ENCODE measurements at regions of chr1 and their contacts with region 1.

Region 1: GRCh38 chr1:227086623-227087022 is 146.5 kb downstream of the COQ8A start:
- DNase-seq: no peak
- ATAC-seq: no peak
- H3K4me3 ChIP-seq: no peak overlapping the region
- H3K4me3 Mint-ChIP-seq: no peak overlapping the region
- H3K27ac ChIP-seq: no peak overlapping the region
- H3K27ac Mint-ChIP-seq: no peak overlapping the region
- H3K4me1 ChIP-seq: no peaks in the 10 kb centered on the region
- H3K4me1 Mint-ChIP-seq: no peaks in the 10 kb centered on the region
- H3K27me3 ChIP-seq: no peaks in the 10 kb centered on the region
- H3K27me3 Mint-ChIP-seq: peaks cover 16% of the 10 kb centered on the region
- CTCF ChIP-seq: no peak

Region 2: DNA sequence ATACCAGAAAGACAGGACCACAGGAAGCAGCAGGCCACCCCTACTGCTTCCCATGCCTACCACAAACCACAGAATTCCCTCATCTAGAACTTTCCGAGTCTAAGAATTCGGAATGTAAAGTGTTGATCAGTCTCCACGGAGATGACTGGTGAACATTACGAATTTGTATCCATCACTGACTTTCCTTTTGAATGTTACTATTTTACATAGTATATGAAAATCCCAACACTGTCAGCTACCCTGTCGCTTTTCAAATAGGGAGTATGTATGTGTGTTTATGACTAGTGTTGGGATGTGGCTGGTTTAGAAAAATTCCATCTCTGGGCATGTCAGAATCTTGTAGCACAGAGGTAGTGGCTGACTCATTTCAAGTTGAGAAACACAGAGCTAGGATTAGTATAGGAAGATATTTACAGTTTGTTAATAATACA is 28.3 kb before region 1 on chr1:
- CTCF ChIA-PET with region 1: no interaction called
- POLR2A ChIA-PET with region 1: no interaction called
- intact Hi-C with region 1: loop called (anchors 1 kb)
- DNase-seq: no peak
- ATAC-seq: no peak
- H3K4me3 ChIP-seq: no peak overlapping the region
- H3K4me3 Mint-ChIP-seq: no peak overlapping the region
- H3K27ac ChIP-seq: no peak overlapping the region
- H3K27ac Mint-ChIP-seq: no peak overlapping the region
- H3K4me1 ChIP-seq: no peaks in the 10 kb centered on the region
- H3K4me1 Mint-ChIP-seq: no peaks in the 10 kb centered on the region
- H3K27me3 ChIP-seq: no peaks in the 10 kb centered on the region
- H3K27me3 Mint-ChIP-seq: peaks cover 12% of the 10 kb centered on the region
- CTCF ChIP-seq: no peak

Region 3: GRCh38 chr1:227068883-227069282 is 17.7 kb before region 1 on chr1:
- CTCF ChIA-PET with region 1: no interaction called
- POLR2A ChIA-PET with region 1: no interaction called
- intact Hi-C with region 1: no loop called
- DNase-seq: no peak
- ATAC-seq: no peak
- H3K4me3 ChIP-seq: no peak overlapping the region
- H3K4me3 Mint-ChIP-seq: no peak overlapping the region
- H3K27ac ChIP-seq: no peak overlapping the region
- H3K27ac Mint-ChIP-seq: no peak overlapping the region
- H3K4me1 ChIP-seq: no peaks in the 10 kb centered on the region
- H3K4me1 Mint-ChIP-seq: no peaks in the 10 kb centered on the region
- H3K27me3 ChIP-seq: peaks cover 0 to 1% (median 0%) of the 10 kb centered on the region in 4 experiments
- H3K27me3 Mint-ChIP-seq: peaks cover 17% of the 10 kb centered on the region
- CTCF ChIP-seq: no peak

Measured in B cell (primary cell).